Ascending aorta (tissue), 2 donors: ENCODE measurements at regions of chrX and their contacts with region 1.

Region 1: GRCh38 chrX:129843459-129844306 is at the start of gene ZDHHC9:
- DNase-seq: peak; percentile 59 to 93
- H3K4me3 ChIP-seq: peak within 1 kb of the TSS; percentile 54 to 77
- H3K27ac ChIP-seq: peak within 1 kb of the TSS; percentile 68 to 77
- H3K4me1 ChIP-seq: no peaks in the 10 kb centered on the region
- H3K27me3 ChIP-seq: no peaks in the 10 kb centered on the region
- CTCF ChIP-seq: no peak
- total RNA-seq, gene ZDHHC9: 43.0 TPM

Region 2: DNA sequence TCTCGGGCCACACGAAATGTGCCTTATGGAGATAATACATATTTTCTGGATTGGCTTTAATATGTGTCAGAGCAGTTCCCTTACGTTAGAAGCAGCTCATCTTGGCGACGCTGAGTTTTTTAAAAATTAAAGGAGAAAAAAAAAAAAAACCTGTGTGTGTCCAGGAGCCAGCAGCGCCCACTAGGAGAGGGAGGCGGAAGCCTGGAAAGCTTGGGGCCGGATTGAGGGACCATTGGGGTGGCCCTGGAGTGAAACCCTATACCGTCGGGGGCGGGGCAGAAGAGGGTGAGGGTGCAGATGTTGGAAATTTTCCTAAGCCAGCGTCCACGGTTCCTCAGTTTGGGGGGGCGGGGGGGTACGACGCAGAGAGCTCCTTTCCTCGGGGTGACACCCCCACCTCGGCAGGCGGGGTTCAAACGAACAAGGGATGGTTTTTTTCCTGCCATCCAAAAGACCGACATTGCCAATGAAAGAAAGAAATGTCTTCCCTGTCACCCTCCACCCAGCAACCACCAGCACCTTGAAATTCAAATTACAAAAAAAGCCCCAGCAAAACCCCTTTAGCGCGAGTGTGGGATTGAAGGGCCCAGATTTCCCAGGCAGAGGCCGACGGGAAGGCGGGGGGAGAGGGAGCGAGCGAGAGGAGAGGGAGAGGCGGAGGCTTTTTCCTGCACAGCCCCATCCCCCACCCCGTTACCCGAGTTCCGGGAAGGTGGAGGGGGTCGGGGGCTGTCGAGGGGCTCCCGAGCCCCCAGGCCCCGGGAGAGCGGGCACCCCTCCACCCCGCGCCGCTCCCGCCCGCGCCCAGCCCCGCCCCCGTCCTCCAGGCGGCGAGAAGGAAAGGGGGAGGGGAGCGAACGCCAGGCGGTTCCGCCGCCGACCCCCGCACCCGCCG is 321.3 kb before region 1 on chrX:
- intact Hi-C with region 1: loop called (anchors 5 kb)
- DNase-seq: peak in 1 of 2 donors; percentile 72
- H3K4me3 ChIP-seq: peak overlapping the region; percentile 62 to 86
- H3K27ac ChIP-seq: peak overlapping the region; percentile 87 to 91
- H3K4me1 ChIP-seq: no peaks in the 10 kb centered on the region
- H3K27me3 ChIP-seq: no peaks in the 10 kb centered on the region
- CTCF ChIP-seq: no peak

Region 3: GRCh38 chrX:129606918-129607317 is 236.8 kb before region 1 on chrX:
- intact Hi-C with region 1: loop called (anchors 10 kb)
- DNase-seq: peak in 1 of 2 donors; percentile 70
- H3K4me3 ChIP-seq: no peak overlapping the region
- H3K27ac ChIP-seq: no peak overlapping the region
- H3K4me1 ChIP-seq: no peaks in the 10 kb centered on the region
- H3K27me3 ChIP-seq: no peaks in the 10 kb centered on the region
- CTCF ChIP-seq: peak; percentile 75 to 80 (median 77)

Region 4: GRCh38 chrX:129905787-129906580 is 62.3 kb after region 1 on chrX and contains the start of gene UTP14A:
- intact Hi-C with region 1: loop called (anchors 2 kb)
- DNase-seq: peak; percentile 58 to 92
- H3K4me3 ChIP-seq: peak within 1 kb of the TSS; percentile 62 to 68
- H3K27ac ChIP-seq: peak within 1 kb of the TSS; percentile 57 to 81
- H3K4me1 ChIP-seq: no peaks in the 10 kb centered on the region
- H3K27me3 ChIP-seq: no peaks in the 10 kb centered on the region
- CTCF ChIP-seq: no peak
- total RNA-seq, gene UTP14A: 1.1 TPM

Region 5: GRCh38 chrX:129982274-129983251 is 138.9 kb after region 1 on chrX and contains the start of gene BCORL1:
- intact Hi-C with region 1: loop called (anchors 5 kb)
- DNase-seq: peak; percentile 75 to 94
- H3K4me3 ChIP-seq: peak within 1 kb of the TSS in 1 of 2 donors; percentile 58
- H3K27ac ChIP-seq: no peak within 1 kb of the TSS
- H3K4me1 ChIP-seq: no peaks in the 10 kb centered on the region
- H3K27me3 ChIP-seq: no peaks in the 10 kb centered on the region
- CTCF ChIP-seq: no peak
- total RNA-seq, gene BCORL1: 10.3 TPM

Region 6: DNA sequence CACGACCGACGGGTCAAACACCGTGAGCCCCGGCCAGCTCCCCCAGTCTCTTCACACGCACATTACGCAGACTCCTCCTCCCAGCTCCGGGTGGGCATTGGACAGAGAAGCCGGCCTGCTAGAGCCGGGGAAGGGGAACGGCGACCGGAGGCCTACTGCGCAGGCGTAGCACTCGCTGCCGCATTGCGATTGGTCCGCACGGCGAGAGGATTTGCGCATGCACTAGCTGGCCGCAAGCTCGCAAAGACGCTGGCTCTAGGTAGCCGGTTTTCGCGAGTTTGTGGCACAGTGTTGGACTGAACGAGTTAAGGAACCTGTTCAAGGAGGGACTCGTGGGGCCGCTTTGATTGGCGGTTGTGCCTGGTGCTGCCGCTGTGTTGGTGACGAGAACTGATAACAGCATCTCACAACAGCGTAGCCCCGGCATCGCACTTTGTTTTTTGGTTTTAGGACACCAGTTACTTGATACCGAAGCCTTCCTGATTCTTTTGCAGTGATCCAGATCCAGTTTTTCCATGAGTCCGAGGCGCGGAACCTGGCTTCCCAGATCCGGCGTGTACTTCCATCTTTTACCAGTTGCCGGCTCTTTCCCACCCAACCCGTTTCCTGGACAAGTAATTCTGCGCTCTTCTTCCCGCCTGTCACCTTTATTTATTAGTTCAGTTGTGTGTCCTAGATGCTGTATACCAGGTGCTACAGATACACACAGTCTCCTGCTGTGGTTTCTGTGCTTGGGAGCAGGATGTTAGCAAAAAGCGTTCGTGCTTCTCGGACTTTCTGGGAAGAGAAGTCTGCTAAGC is 322.2 kb after region 1 on chrX and contains the start of gene AIFM1:
- intact Hi-C with region 1: loop called (anchors 5 kb)
- DNase-seq: peak; percentile 70 to 94
- H3K4me3 ChIP-seq: peak within 1 kb of the TSS; percentile 49 to 76
- H3K27ac ChIP-seq: peak within 1 kb of the TSS; percentile 62 to 82
- H3K4me1 ChIP-seq: no peaks in the 10 kb centered on the region
- H3K27me3 ChIP-seq: no peaks in the 10 kb centered on the region
- CTCF ChIP-seq: no peak
- total RNA-seq, gene AIFM1: 0.75 TPM